WTC11 (cell line): ENCODE measurements at regions of chr7 and their contacts with region 1.

Region 1: GRCh38 chr7:6160191-6160623 is 112.2 kb downstream of the CYTH3 start:
- DNase-seq: peak; percentile 67
- ATAC-seq: peak; percentile 80
- H3K4me3 Mint-ChIP-seq: no peak overlapping the region
- H3K27ac Mint-ChIP-seq: peak overlapping the region; percentile 65
- H3K4me1 Mint-ChIP-seq: peaks cover 12% of the 10 kb centered on the region
- H3K27me3 Mint-ChIP-seq: no peaks in the 10 kb centered on the region
- CTCF ChIP-seq: no peak; the same call in 1 of the 2 replicates

Region 2: GRCh38 chr7:6032641-6033040 is 127.6 kb before region 1 on chr7:
- CTCF ChIA-PET with region 1: no interaction called
- POLR2A ChIA-PET with region 1: no interaction called
- DNase-seq: no peak
- ATAC-seq: no peak
- H3K4me3 Mint-ChIP-seq: no peak overlapping the region
- H3K27ac Mint-ChIP-seq: no peak overlapping the region
- H3K4me1 Mint-ChIP-seq: no peaks in the 10 kb centered on the region
- H3K27me3 Mint-ChIP-seq: no peaks in the 10 kb centered on the region
- CTCF ChIP-seq: no peak

Region 3: DNA sequence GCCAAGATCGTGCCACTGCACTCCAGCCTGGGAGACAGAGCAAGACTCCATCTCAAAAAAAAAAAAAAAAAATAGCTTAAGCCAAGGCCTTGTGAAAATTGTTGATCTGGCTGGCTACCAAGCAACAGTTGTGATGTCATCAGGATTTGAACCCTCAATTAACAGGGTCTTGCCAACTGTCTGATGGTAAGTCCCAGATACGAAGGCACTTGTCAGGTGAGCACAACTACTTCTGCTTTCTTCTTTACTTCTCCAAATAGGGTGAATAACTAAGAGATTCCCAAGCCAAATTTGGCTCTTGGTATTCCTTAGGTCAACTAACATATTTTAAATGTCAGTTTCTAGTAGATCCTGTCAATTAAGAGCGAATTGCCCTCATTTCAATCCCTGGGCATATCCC is 81.7 kb before region 1 on chr7:
- CTCF ChIA-PET with region 1: no interaction called
- POLR2A ChIA-PET with region 1: no interaction called
- DNase-seq: no peak
- ATAC-seq: no peak
- H3K4me3 Mint-ChIP-seq: no peak overlapping the region
- H3K27ac Mint-ChIP-seq: no peak overlapping the region
- H3K4me1 Mint-ChIP-seq: peaks cover 5% of the 10 kb centered on the region; the same call in 1 of the 2 replicates
- H3K27me3 Mint-ChIP-seq: no peaks in the 10 kb centered on the region; the same call in 1 of the 2 replicates
- CTCF ChIP-seq: no peak

Region 4: DNA sequence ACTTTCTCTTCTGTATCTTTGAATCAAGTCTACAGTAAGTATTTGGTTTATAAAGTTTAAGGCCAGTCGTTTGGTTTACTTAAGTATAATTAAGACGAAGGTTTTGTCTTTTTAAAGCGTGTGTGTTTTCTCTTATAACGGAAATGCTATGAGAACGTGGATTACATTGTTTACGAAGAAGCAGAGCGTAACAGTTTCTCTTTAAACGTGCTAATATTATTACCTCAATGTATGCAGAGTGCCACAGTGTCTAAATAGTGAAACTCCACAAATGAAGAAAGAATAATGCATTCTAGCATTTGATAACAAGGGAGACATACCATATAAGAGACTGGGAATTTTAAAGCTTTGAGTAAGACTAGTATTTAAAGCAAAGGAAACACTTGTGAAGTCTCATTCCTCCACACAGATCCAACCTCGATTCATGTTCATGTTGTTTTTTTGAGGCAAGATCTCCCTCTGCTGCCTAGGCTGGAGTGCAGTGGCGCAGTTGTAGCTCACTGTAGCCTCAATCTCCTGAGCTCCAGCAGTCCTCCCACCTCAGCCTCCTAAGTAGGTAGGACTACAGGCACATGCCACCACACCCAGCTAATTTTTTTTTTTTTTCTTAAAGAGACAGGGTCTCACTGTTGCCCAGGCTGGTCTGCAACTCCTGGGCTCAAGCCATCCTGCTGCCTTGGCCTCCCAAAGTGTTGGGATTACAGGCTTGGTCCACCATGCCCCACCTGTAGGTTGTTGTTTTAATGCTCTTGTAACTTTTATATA is 53.9 kb before region 1 on chr7:
- CTCF ChIA-PET with region 1: no interaction called
- POLR2A ChIA-PET with region 1: no interaction called
- DNase-seq: no peak
- ATAC-seq: no peak
- H3K4me3 Mint-ChIP-seq: peak overlapping the region; percentile 82
- H3K27ac Mint-ChIP-seq: peak overlapping the region; percentile 76
- H3K4me1 Mint-ChIP-seq: peaks cover 12% of the 10 kb centered on the region
- H3K27me3 Mint-ChIP-seq: no peaks in the 10 kb centered on the region
- CTCF ChIP-seq: no peak

Region 5: DNA sequence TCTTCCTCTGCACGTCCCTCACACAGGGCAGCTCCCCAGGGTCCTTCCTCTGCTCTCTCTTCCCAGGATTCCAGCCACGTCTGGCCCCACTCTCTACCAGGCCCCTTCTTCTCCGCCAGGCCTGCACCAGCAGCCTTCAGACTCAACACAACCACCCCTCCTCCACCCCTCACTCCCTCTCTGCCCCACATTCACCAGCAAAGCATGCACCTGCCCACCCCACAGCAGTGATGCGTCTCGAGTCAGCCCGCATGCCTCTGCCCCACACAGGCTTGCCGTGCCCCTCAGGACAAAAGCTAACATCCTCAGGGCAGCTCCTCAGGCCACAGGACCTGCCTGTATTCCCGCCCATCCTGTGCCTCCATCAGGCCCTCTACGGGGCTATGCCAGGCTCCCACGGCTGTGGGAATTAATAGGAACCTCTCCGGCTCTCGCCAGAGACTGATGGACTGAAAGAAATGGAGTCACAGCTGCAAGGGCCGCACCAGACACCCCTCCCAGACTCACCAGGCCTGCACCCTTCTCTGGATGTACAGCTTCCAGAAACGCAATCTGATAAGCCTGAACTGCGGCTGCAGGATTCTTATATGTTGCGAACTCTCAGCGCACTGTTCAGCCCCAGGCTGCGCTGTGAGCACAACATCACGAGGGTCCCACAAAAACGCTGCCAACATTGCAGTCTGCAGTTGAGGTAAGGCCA is 12.2 kb after region 1 on chr7:
- CTCF ChIA-PET with region 1: interaction called, 17 read pairs
- POLR2A ChIA-PET with region 1: no interaction called
- DNase-seq: no peak
- ATAC-seq: peak; percentile 22
- H3K4me3 Mint-ChIP-seq: peak overlapping the region; percentile 20; the same call in 1 of the 2 replicates
- H3K27ac Mint-ChIP-seq: peak overlapping the region; percentile 92
- H3K4me1 Mint-ChIP-seq: peaks cover 21% of the 10 kb centered on the region
- H3K27me3 Mint-ChIP-seq: no peaks in the 10 kb centered on the region
- CTCF ChIP-seq: no peak

Region 6: GRCh38 chr7:6197801-6198551 is 37.8 kb after region 1 on chr7:
- CTCF ChIA-PET with region 1: interaction called, 12 read pairs
- POLR2A ChIA-PET with region 1: interaction called, 6 read pairs
- DNase-seq: no peak
- ATAC-seq: no peak
- H3K4me3 Mint-ChIP-seq: no peak overlapping the region
- H3K27ac Mint-ChIP-seq: peak overlapping the region; percentile 95
- H3K4me1 Mint-ChIP-seq: peaks cover 57% of the 10 kb centered on the region
- H3K27me3 Mint-ChIP-seq: no peaks in the 10 kb centered on the region
- CTCF ChIP-seq: no peak

Region 7: DNA sequence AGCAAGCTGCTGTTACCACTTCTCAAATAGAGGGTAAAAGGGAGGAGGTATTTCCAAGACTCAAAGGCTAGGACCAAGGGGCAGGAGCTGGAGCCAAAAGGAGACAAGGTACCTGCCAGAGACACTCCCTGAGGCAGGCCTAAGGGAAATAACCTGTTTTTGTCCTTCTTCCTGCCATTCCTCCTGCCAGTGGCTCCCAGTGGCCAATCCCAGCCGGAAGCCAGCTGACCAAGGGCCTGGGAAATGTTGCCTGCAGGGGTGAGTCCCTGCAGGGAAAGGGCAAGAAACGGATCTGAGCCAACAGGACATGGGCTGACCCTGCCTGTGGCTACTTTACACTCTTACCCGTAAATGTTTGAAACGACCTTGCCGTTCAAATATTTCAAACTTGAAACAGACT is 108.7 kb after region 1 on chr7:
- CTCF ChIA-PET with region 1: interaction called, 16 read pairs
- POLR2A ChIA-PET with region 1: no interaction called
- DNase-seq: peak; percentile 33
- ATAC-seq: no peak
- H3K4me3 Mint-ChIP-seq: no peak overlapping the region
- H3K27ac Mint-ChIP-seq: no peak overlapping the region
- H3K4me1 Mint-ChIP-seq: peaks cover 40% of the 10 kb centered on the region
- H3K27me3 Mint-ChIP-seq: peaks cover 21% of the 10 kb centered on the region
- CTCF ChIP-seq: no peak

Region 8: DNA sequence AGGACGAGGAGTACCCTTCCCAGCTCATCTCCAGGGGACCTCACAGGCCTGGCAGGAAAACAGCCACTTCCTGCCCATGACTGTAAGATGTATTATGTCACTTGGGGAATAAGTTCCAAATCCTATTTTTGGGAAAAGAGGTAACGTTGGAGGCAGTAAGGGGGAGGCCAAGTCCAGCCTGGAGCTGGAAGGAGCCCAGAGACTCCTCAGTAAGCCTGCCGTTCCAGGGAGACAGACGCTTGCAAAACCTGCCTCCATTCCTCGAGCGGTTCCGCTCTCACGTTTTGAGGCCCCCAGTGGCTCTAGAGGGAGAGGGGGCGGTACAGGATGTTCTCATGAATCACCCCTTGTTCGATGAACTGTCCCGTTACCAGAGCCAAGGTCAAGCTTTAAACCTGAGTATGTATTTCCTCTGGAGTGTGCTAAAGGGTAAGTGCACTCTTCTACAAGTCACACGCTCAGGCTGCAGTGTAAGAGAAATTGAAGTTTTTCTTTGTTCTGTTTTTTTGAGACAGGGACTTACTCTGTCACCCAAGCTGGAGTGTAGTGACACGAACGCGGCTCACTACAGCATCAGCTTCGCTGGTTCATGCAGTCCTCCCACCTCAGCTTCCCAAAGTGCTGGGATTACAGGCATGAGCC is 157.7 kb after region 1 on chr7:
- CTCF ChIA-PET with region 1: interaction called, 53 read pairs
- POLR2A ChIA-PET with region 1: no interaction called
- DNase-seq: peak; percentile 20
- ATAC-seq: peak; percentile 58
- H3K4me3 Mint-ChIP-seq: no peak overlapping the region
- H3K27ac Mint-ChIP-seq: peak overlapping the region; percentile 18
- H3K4me1 Mint-ChIP-seq: peaks cover 9% of the 10 kb centered on the region
- H3K27me3 Mint-ChIP-seq: no peaks in the 10 kb centered on the region
- CTCF ChIP-seq: no peak

Region 9: GRCh38 chr7:6323967-6324701 is 163.9 kb after region 1 on chr7:
- CTCF ChIA-PET with region 1: interaction called, 53 read pairs
- POLR2A ChIA-PET with region 1: no interaction called
- DNase-seq: no peak
- ATAC-seq: no peak; the same call in 1 of the 2 replicates
- H3K4me3 Mint-ChIP-seq: no peak overlapping the region
- H3K27ac Mint-ChIP-seq: peak overlapping the region; percentile 81; the same call in 1 of the 2 replicates
- H3K4me1 Mint-ChIP-seq: peaks cover 7% of the 10 kb centered on the region
- H3K27me3 Mint-ChIP-seq: no peaks in the 10 kb centered on the region
- CTCF ChIP-seq: no peak